ENCODE measurements at regions of chr2 and their contacts with region 1.

Region 1: DNA sequence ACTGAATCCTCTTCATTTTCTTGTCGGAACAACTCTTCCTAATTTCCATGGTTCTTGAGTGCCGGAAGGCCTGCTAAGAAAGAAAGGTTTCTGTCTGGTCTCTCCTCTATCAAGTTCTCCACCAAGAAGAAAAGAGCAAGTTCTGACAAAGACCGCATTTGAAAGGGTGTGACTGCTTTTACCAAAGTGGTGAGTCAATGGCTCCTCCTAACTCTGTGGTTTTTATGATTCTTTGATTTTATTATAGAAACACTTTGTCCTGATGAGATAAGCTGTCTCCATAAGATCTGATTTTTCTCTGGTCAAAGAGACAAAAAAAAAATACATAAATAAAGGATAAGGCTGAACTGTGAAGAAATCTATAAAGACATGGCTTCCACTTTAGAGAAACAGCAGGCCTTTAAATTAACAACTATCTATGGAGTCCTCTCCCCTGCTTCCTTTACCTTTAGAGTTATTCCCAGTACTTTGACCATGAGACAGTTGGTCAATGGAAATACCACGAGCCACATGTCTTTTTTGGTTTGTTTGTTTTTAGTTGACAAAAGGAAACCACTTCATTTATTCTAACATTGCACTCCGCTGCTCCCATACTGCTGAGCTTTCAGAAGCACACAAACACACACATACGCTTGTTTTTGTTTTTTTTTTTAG is 67.7 kb downstream of the REL start:
- DNase-seq: no peak

Region 2: GRCh38 chr2:60759654-60760053 is 189.4 kb before region 1 on chr2:
- in situ Hi-C with region 1: no loop called
- DNase-seq: peak; percentile 40

Region 3: DNA sequence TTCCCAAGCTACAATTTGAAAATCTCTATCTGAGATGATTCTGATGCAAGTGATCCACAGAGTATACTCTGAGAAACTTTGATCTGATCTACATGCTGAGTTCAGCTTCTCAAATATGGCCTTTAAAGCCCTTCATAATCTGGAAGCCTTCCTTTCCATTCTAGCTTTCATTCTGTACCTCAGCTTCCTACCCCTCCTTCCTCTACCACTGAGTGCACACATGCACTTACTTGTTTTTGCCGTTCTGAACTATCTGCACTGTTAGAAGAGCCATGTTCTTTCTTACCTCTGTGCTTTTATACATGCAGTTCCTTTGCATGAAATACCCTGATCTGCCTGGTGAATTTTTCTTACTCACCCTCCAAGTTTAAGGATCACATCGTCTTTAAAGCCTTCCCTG is 42.7 kb before region 1 on chr2:
- in situ Hi-C with region 1: loop called (anchors 5 kb)
- DNase-seq: no peak

Measured in G401 (cell line).